Breast epithelium (tissue), 4 donors: ENCODE measurements at regions of chr5 and their contacts with region 1.

Region 1: GRCh38 chr5:41809128-41809527 is 61.1 kb downstream of the OXCT1 start:
- DNase-seq: no peak
- H3K4me3 ChIP-seq: no peak overlapping the region
- H3K27ac ChIP-seq: no peak overlapping the region
- H3K4me1 ChIP-seq: no peaks in the 10 kb centered on the region
- H3K27me3 ChIP-seq: no peaks in the 10 kb centered on the region
- CTCF ChIP-seq: no peak
- POLR2A ChIP-seq: no peak

Region 2: GRCh38 chr5:41764650-41765049 is 44.5 kb before region 1 on chr5:
- intact Hi-C with region 1: loop called (anchors 2 kb)
- DNase-seq: no peak
- H3K4me3 ChIP-seq: no peak overlapping the region
- H3K27ac ChIP-seq: no peak overlapping the region
- H3K4me1 ChIP-seq: no peaks in the 10 kb centered on the region
- H3K27me3 ChIP-seq: no peaks in the 10 kb centered on the region
- CTCF ChIP-seq: no peak
- POLR2A ChIP-seq: no peak

Region 3: DNA sequence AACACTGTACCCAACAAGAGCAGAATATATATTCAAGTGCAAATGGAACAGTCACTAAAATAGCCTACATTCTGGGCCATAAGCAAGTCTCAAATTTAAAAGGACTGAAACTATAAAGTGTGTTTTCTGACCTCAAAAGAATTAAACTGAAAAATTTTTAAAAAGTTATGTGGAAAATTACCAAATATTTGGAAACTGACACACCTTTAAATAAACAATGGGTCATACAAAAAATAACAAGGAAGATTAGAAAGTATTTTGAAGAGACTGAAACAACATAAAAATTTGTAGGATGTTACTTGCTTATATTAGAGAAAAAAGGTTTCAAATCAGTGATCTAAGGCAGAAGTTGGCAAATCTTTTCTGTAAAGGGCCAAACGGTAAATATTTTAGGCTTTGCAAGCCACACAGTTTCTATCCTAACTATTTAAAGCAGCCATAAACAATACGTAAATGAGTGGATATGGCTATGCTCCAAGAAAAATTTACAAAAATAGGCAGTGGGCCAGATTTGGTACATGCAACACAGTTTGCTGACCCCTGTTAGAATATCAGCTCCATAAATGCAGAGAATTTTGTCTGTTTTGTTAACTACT is 20.2 kb before region 1 on chr5:
- intact Hi-C with region 1: no loop called
- DNase-seq: no peak
- H3K4me3 ChIP-seq: no peak overlapping the region
- H3K27ac ChIP-seq: no peak overlapping the region
- H3K4me1 ChIP-seq: no peaks in the 10 kb centered on the region
- H3K27me3 ChIP-seq: no peaks in the 10 kb centered on the region
- CTCF ChIP-seq: no peak
- POLR2A ChIP-seq: no peak

Region 4: DNA sequence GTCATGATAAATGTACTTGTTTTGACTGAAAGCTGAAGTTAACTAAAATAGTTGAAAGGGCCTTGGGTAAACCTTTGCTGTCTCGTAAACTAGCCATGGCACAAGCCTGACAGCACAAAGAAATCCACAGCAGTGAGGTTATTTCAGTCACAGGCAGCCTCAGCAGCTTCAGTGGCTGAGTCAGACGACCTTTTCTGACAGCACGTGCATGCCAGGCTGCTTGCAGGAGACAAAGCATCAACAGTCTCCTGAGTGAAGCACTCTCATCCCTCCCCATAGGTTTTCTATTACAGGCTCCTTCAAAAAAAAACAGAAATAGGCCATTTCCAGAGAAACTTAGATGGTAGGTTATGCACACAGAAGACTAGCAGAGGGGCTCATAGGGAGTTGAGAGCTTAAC is 26.5 kb after region 1 on chr5:
- intact Hi-C with region 1: no loop called
- DNase-seq: no peak
- H3K4me3 ChIP-seq: no peak overlapping the region
- H3K27ac ChIP-seq: no peak overlapping the region
- H3K4me1 ChIP-seq: no peaks in the 10 kb centered on the region
- H3K27me3 ChIP-seq: no peaks in the 10 kb centered on the region
- CTCF ChIP-seq: no peak
- POLR2A ChIP-seq: no peak

Region 5: GRCh38 chr5:42495914-42496313 is 686.8 kb after region 1 on chr5:
- intact Hi-C with region 1: no loop called
- DNase-seq: no peak
- H3K4me3 ChIP-seq: no peak overlapping the region
- H3K27ac ChIP-seq: no peak overlapping the region
- H3K4me1 ChIP-seq: peaks cover 0 to 2% of the 10 kb centered on the region in 2 donors
- H3K27me3 ChIP-seq: no peaks in the 10 kb centered on the region
- CTCF ChIP-seq: no peak
- POLR2A ChIP-seq: no peak